PC-9 (cell line): ENCODE measurements at regions of chr13 and their contacts with region 1.

Region 1: DNA sequence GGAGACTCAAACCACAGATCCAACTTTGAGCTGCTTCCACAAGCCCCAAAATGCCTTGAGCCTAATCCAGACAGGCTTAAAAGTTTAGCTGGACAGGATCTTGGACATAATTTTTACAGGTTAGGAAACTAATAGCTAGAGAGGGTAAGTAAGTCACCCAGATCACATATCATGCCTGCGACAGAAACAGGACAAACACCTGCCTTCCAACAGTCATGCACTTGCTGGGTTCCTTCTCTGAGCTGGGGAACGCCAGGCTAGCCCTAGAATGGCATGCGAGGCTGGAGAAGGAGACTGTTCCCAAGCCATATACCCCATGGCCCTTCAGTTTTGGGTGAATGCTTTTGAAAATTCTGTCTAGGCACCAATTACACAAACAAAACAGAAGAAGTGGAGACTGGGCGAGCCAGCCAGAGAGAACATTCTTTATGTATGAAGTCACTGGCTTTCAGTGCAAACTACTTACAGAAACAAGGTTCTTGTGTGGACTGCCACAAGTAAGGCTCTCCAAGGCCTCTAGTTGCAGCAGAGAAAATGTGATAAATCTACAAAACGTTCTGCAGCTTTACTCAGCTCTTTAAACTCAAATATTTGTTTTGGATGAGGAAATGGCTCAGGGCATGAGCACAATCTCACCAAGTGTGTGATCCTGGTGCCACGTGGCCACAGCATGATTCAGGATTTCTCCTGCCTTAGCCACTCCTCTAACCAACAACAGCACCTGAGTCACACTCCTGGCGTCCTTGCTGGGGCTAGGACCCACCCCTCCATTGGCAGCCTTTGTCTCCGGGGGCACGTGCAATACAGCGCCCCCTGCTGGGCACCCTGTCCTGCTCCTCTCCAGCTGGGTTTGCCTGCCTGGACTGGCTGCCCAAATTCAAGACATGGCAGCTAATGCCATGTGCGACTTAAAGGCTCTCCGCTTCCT is 73.4 kb upstream of the UBL3 start:
- DNase-seq: peak; percentile 83 to 97
- H3K4me3 ChIP-seq: peak overlapping the region; percentile 32; the same call in 1 of the 2 replicates
- H3K27ac ChIP-seq: peak overlapping the region; percentile 98
- H3K4me1 ChIP-seq: peaks cover 82% of the 10 kb centered on the region
- H3K27me3 ChIP-seq: no peaks in the 10 kb centered on the region
- CTCF ChIP-seq: peak; percentile 99

Region 2: GRCh38 chr13:29791997-29792780 is 131.6 kb before region 1 on chr13:
- CTCF ChIA-PET with region 1: no interaction called
- POLR2A ChIA-PET with region 1: no interaction called
- intact Hi-C with region 1: no loop called
- DNase-seq: no peak
- H3K4me3 ChIP-seq: no peak overlapping the region
- H3K27ac ChIP-seq: no peak overlapping the region
- H3K4me1 ChIP-seq: no peaks in the 10 kb centered on the region
- H3K27me3 ChIP-seq: no peaks in the 10 kb centered on the region
- CTCF ChIP-seq: no peak

Region 3: GRCh38 chr13:29850224-29850898 is 73.5 kb before region 1 on chr13 and contains the start of gene UBL3:
- CTCF ChIA-PET with region 1: interaction called, 6 read pairs
- POLR2A ChIA-PET with region 1: interaction called, 19 read pairs
- intact Hi-C with region 1: loop called (anchors 1 kb)
- DNase-seq: peak; percentile 85 to 89
- H3K4me3 ChIP-seq: peak within 1 kb of the TSS; percentile 75
- H3K27ac ChIP-seq: peak within 1 kb of the TSS; percentile 91
- H3K4me1 ChIP-seq: peaks cover 42% of the 10 kb centered on the region
- H3K27me3 ChIP-seq: no peaks in the 10 kb centered on the region
- CTCF ChIP-seq: no peak
- total RNA-seq, gene UBL3: 22.1 and 24.4 TPM in 2 replicates

Region 4: DNA sequence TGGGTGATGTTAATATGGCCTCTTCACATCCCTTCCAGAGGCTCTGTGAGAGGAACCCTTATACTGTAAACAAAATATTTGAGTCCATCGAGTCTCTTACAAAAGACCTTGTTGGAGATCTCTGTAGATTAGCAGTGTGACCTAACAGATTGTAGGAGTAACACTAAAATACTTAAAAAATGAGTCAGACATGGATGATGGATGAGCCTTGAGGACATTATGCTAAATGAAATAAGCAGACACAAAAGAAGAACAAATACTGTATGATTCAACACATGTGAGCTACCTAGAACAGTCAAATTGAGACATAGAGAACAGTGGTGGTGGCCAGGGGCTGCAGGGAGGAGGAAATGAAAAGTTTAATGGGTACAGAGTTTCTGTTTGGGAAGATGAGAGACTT is 78.8 kb after region 1 on chr13:
- CTCF ChIA-PET with region 1: interaction called, 4 read pairs
- POLR2A ChIA-PET with region 1: no interaction called
- intact Hi-C with region 1: loop called (anchors 5 kb)
- DNase-seq: peak; percentile 17 to 98
- H3K4me3 ChIP-seq: no peak overlapping the region
- H3K27ac ChIP-seq: peak overlapping the region; percentile 12; the same call in 1 of the 2 replicates
- H3K4me1 ChIP-seq: peaks cover 12% of the 10 kb centered on the region
- H3K27me3 ChIP-seq: no peaks in the 10 kb centered on the region
- CTCF ChIP-seq: no peak

Region 5: DNA sequence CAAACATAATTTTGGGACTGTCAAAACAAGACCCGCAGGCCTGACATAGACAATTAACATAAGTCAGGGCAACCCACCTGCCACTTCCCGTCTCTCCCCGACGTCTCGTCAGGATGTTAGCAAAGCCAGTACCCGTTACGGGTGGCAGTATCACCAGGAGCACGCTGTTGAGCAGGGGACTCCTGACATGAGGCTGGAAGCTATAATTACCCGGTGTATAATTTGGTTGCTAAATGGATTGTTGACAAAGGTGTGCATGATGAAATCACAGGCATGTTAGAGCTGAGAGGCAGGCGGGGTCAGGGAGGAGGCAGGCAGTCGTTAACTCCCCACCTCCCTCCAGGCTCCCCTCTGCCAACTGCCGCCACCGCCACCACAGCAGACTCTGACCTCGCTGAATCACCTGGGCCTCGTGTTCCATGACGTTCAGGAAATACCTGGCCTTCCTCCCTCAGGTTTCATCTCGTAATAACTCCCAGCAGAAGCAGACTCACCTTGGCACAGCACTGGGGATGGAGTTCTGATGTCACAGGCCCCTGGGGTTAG is 184.9 kb after region 1 on chr13:
- CTCF ChIA-PET with region 1: interaction called, 15 read pairs
- POLR2A ChIA-PET with region 1: no interaction called
- intact Hi-C with region 1: loop called (anchors 1 kb)
- DNase-seq: peak; percentile 84 to 94
- H3K4me3 ChIP-seq: peak overlapping the region; percentile 40; the same call in 1 of the 2 replicates
- H3K27ac ChIP-seq: peak overlapping the region; percentile 77
- H3K4me1 ChIP-seq: peaks cover 35% of the 10 kb centered on the region
- H3K27me3 ChIP-seq: no peaks in the 10 kb centered on the region
- CTCF ChIP-seq: no peak